Prostate gland (tissue), 2 donors: ENCODE measurements at regions of chr1 and their contacts with region 1.

Region 1: DNA sequence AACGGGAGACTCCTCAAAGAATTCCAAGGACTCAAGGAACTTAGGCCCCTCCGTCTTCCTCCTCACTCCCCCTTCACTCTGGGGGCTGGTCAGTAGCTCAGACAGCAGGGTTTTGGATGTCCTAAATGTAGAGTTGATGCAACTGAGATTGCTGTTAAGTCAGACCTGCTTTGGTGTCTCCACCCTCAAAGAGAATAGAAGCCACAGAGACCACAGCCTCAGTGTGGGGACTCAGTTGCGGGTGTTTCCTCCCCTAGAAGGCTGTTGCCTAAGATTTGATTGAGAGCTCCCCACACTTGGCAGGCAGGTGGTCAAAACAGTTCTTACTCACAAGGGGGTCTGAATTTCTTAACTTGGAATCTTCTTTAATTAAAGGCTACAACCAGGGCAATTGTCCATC is 7.6 kb downstream of the MAN1C1 start:
- DNase-seq: no peak
- H3K4me3 ChIP-seq: no peak overlapping the region
- H3K27ac ChIP-seq: no peak overlapping the region
- H3K4me1 ChIP-seq: peaks cover 11% of the 10 kb centered on the region
- H3K27me3 ChIP-seq: no peaks in the 10 kb centered on the region
- CTCF ChIP-seq: no peak
- POLR2A ChIP-seq: no peak

Region 2: GRCh38 chr1:25658791-25659431 is 34.8 kb after region 1 on chr1:
- intact Hi-C with region 1: loop called (anchors 5 kb)
- DNase-seq: peak; percentile 49
- H3K4me3 ChIP-seq: no peak overlapping the region
- H3K27ac ChIP-seq: peak overlapping the region; percentile 50 to 52
- H3K4me1 ChIP-seq: peaks cover 5% of the 10 kb centered on the region
- H3K27me3 ChIP-seq: no peaks in the 10 kb centered on the region
- CTCF ChIP-seq: no peak
- POLR2A ChIP-seq: no peak

Region 3: GRCh38 chr1:25743826-25744581 is 119.8 kb after region 1 on chr1:
- intact Hi-C with region 1: no loop called
- DNase-seq: peak; percentile 73
- H3K4me3 ChIP-seq: no peak overlapping the region
- H3K27ac ChIP-seq: peak overlapping the region; percentile 71 to 82
- H3K4me1 ChIP-seq: peaks cover 20% of the 10 kb centered on the region
- H3K27me3 ChIP-seq: no peaks in the 10 kb centered on the region
- CTCF ChIP-seq: peak in 3 of 4 experiments; percentile 56 to 71 (median 69)
- POLR2A ChIP-seq: no peak